ENCODE measurements at regions of chr14 and their contacts with region 1.

Region 1: GRCh38 chr14:76918751-76919543 is 92.7 kb downstream of the LRRC74A start:
- DNase-seq: peak; percentile 42
- ATAC-seq: no peak
- H3K4me3 Mint-ChIP-seq: peak overlapping the region; percentile 34
- H3K27ac Mint-ChIP-seq: peak overlapping the region; percentile 43
- H3K4me1 Mint-ChIP-seq: peaks cover 46% of the 10 kb centered on the region
- H3K27me3 Mint-ChIP-seq: no peaks in the 10 kb centered on the region
- CTCF ChIP-seq: no peak

Region 2: GRCh38 chr14:76759589-76759988 is 159.4 kb before region 1 on chr14:
- CTCF ChIA-PET with region 1: no interaction called
- POLR2A ChIA-PET with region 1: no interaction called
- intact Hi-C with region 1: no loop called
- DNase-seq: no peak
- ATAC-seq: no peak
- H3K4me3 Mint-ChIP-seq: no peak overlapping the region
- H3K27ac Mint-ChIP-seq: no peak overlapping the region
- H3K4me1 Mint-ChIP-seq: peaks cover 2% of the 10 kb centered on the region
- H3K27me3 Mint-ChIP-seq: peaks cover 39% of the 10 kb centered on the region
- CTCF ChIP-seq: no peak

Region 3: GRCh38 chr14:76793956-76794355 is 125.0 kb before region 1 on chr14:
- CTCF ChIA-PET with region 1: no interaction called
- POLR2A ChIA-PET with region 1: no interaction called
- intact Hi-C with region 1: no loop called
- DNase-seq: no peak
- ATAC-seq: no peak
- H3K4me3 Mint-ChIP-seq: no peak overlapping the region
- H3K27ac Mint-ChIP-seq: no peak overlapping the region
- H3K4me1 Mint-ChIP-seq: peaks cover 4% of the 10 kb centered on the region
- H3K27me3 Mint-ChIP-seq: no peaks in the 10 kb centered on the region
- CTCF ChIP-seq: no peak

Region 4: GRCh38 chr14:76941946-76942805 is 23.2 kb after region 1 on chr14:
- CTCF ChIA-PET with region 1: interaction called, 17 read pairs
- POLR2A ChIA-PET with region 1: interaction called, 3 read pairs
- intact Hi-C with region 1: no loop called
- DNase-seq: no peak
- ATAC-seq: peak; percentile 21
- H3K4me3 Mint-ChIP-seq: no peak overlapping the region
- H3K27ac Mint-ChIP-seq: no peak overlapping the region
- H3K4me1 Mint-ChIP-seq: peaks cover 19% of the 10 kb centered on the region
- H3K27me3 Mint-ChIP-seq: no peaks in the 10 kb centered on the region
- CTCF ChIP-seq: no peak

Region 5: GRCh38 chr14:76956316-76957090 is 37.6 kb after region 1 on chr14:
- CTCF ChIA-PET with region 1: interaction called, 35 read pairs
- POLR2A ChIA-PET with region 1: interaction called, 7 read pairs
- intact Hi-C with region 1: loop called (anchors 5 kb)
- DNase-seq: peak; percentile 96
- ATAC-seq: peak; percentile 64
- H3K4me3 Mint-ChIP-seq: peak overlapping the region; percentile 79
- H3K27ac Mint-ChIP-seq: peak overlapping the region; percentile 94
- H3K4me1 Mint-ChIP-seq: peaks cover 68% of the 10 kb centered on the region
- H3K27me3 Mint-ChIP-seq: no peaks in the 10 kb centered on the region
- CTCF ChIP-seq: no peak

Region 6: DNA sequence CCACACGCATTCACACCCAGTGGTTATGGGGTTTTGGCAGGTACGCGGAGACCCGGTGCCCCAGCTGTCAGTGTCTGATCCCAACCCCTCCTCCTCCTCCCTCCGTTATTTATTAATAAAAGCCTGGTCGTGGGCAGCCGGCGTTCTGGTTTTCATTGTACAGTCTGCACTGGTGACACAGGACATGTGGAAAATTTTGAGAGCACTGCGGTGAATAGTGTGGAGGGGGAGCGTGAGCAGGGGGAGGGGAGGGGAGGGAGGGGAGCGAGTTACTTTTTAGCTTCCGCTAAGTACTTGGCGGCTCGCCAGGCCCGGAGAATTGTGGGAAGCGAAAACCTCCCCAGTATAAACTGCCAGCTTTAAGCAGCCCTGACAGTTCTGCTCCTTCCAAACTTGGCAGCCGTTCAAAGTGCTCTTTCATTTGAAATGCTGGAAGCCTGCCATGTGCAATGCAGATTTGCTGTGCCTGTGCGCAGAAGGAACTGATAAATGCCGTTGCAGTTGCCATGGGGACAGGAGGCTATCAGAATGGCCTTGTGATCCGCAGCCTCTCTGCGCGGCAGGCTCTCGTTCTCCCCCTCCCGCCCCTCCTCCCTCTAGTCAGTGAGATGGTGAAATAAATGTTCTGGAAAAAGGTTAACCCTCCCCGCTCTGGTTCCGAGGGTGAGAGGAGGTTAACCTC is 121.3 kb after region 1 on chr14:
- CTCF ChIA-PET with region 1: interaction called, 63 read pairs
- POLR2A ChIA-PET with region 1: interaction called, 4 read pairs
- intact Hi-C with region 1: no loop called
- DNase-seq: peak; percentile 97
- ATAC-seq: peak; percentile 66
- H3K4me3 Mint-ChIP-seq: peak overlapping the region; percentile 68
- H3K27ac Mint-ChIP-seq: peak overlapping the region; percentile 96
- H3K4me1 Mint-ChIP-seq: peaks cover 82% of the 10 kb centered on the region
- H3K27me3 Mint-ChIP-seq: no peaks in the 10 kb centered on the region
- CTCF ChIP-seq: no peak

Region 7: GRCh38 chr14:77059276-77059915 is 140.4 kb after region 1 on chr14:
- CTCF ChIA-PET with region 1: interaction called, 103 read pairs
- POLR2A ChIA-PET with region 1: no interaction called
- intact Hi-C with region 1: no loop called
- DNase-seq: no peak
- ATAC-seq: no peak
- H3K4me3 Mint-ChIP-seq: no peak overlapping the region
- H3K27ac Mint-ChIP-seq: no peak overlapping the region
- H3K4me1 Mint-ChIP-seq: no peaks in the 10 kb centered on the region
- H3K27me3 Mint-ChIP-seq: no peaks in the 10 kb centered on the region
- CTCF ChIP-seq: no peak